Activated CD4-positive, alpha-beta memory T cell treated with anti-CD3 and anti-CD28 coated beads for 36 hours (primary cell): ENCODE measurements at regions of chr12 and their contacts with region 1.

Region 1: DNA sequence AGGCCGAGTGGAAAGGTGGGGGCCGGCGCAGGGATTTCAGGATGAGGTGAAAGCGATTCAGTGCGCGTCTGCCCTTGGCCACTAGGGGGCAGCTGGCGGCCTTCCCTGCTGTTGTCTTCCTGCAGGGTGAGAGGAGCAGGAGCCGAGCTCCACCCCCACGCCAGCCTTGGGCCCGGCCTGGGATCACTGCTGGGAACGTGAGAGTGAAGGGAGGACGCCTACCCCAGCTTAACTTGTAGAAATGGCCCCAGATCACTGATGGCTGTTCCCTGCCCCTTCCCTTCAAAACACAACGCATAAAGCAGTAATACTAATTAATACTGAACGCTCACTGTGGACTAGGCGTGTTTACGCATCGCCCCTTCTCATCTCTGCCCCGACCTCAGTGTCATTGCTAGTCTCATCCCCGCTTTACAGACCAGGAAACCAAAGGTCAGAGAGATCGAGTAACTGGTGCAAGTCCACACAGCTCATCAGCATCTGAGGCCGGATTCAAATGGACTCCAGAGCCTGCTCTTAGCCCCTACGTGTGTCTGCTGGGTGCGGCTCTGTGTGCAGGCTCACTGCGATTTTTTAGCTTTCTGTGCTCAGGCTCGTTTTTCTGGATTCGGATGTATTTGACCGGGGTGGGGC is 24.3 kb downstream of the MVK start:
- DNase-seq: peak; percentile 75
- H3K4me3 Mint-ChIP-seq: no peak overlapping the region
- H3K27ac Mint-ChIP-seq: no peak overlapping the region
- H3K4me1 Mint-ChIP-seq: peaks cover 33% of the 10 kb centered on the region
- H3K27me3 Mint-ChIP-seq: no peaks in the 10 kb centered on the region

Region 2: GRCh38 chr12:109239179-109239578 is 358.7 kb before region 1 on chr12:
- CTCF ChIA-PET with region 1: no interaction called
- POLR2A ChIA-PET with region 1: no interaction called
- intact Hi-C with region 1: no loop called
- DNase-seq: peak; percentile 11
- H3K4me3 Mint-ChIP-seq: no peak overlapping the region
- H3K27ac Mint-ChIP-seq: no peak overlapping the region
- H3K4me1 Mint-ChIP-seq: peaks cover 4% of the 10 kb centered on the region
- H3K27me3 Mint-ChIP-seq: no peaks in the 10 kb centered on the region

Region 3: DNA sequence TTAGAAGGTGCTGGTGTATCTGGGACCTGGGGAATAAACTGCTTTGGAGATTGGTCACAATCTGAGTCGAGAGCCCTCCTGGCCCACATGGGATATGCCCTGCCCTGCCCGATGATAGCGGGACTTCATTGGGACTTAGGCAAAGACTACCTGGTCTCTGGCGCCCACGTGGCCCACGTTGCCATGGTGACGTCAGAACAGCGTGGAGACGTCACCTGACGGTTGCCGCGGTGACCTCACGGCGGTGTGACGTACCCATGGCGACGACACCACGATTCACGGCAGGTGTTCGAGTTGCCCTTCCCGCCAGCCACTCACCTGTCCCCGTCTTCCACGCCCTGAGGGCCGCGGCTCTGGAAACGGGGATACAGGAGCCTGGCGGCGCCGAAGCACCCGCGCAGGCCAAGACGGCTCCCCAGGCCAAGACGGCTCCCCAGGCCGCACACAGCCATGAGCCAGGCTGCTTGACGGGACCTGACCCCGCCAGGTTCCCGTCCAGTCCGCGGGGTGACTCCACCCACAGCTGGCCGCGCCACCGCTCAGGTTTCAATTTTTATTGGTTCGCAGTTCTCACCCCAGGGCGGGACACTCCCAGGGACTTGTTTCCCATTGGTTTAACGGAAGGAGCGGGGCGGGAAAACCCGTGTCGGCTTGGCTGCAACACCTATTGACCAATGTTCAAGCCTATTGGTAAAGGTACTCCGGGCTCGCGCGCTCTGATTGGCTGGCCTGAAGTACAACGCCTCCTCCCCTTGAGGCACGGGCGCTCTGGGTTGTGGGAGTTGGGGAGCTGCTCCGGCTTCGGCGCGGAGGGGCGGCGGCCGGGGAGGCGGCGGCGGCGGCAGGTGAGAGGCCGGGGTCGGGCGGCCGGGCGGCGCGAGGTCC is 24.6 kb before region 1 on chr12 and contains the starts of genes MMAB and MVK:
- CTCF ChIA-PET with region 1: interaction called, 26 read pairs
- POLR2A ChIA-PET with region 1: interaction called, 3 read pairs
- intact Hi-C with region 1: no loop called
- DNase-seq: peak; percentile 100
- H3K4me3 Mint-ChIP-seq: peak within 1 kb of the TSS; percentile 86
- H3K27ac Mint-ChIP-seq: peak within 1 kb of the TSS; percentile 85
- H3K4me1 Mint-ChIP-seq: peaks cover 27% of the 10 kb centered on the region
- H3K27me3 Mint-ChIP-seq: no peaks in the 10 kb centered on the region
- total RNA-seq, gene MMAB: 42.4 to 48.3 TPM
- total RNA-seq, gene MVK: 21.2 TPM

Region 4: GRCh38 chr12:109586385-109587296 is 11.3 kb before region 1 on chr12:
- CTCF ChIA-PET with region 1: interaction called, 19 read pairs
- POLR2A ChIA-PET with region 1: no interaction called
- intact Hi-C with region 1: no loop called
- DNase-seq: no peak
- H3K4me3 Mint-ChIP-seq: no peak overlapping the region
- H3K27ac Mint-ChIP-seq: no peak overlapping the region
- H3K4me1 Mint-ChIP-seq: no peaks in the 10 kb centered on the region
- H3K27me3 Mint-ChIP-seq: no peaks in the 10 kb centered on the region

Region 5: GRCh38 chr12:109612975-109613502 is 15.1 kb after region 1 on chr12:
- CTCF ChIA-PET with region 1: interaction called, 11 read pairs
- POLR2A ChIA-PET with region 1: no interaction called
- intact Hi-C with region 1: no loop called
- DNase-seq: no peak
- H3K4me3 Mint-ChIP-seq: no peak overlapping the region
- H3K27ac Mint-ChIP-seq: no peak overlapping the region
- H3K4me1 Mint-ChIP-seq: no peaks in the 10 kb centered on the region
- H3K27me3 Mint-ChIP-seq: peaks cover 22% of the 10 kb centered on the region

Region 6: GRCh38 chr12:109621211-109621694 is 23.3 kb after region 1 on chr12:
- CTCF ChIA-PET with region 1: interaction called, 15 read pairs
- POLR2A ChIA-PET with region 1: no interaction called
- intact Hi-C with region 1: no loop called
- DNase-seq: no peak
- H3K4me3 Mint-ChIP-seq: no peak overlapping the region
- H3K27ac Mint-ChIP-seq: no peak overlapping the region
- H3K4me1 Mint-ChIP-seq: peaks cover 4% of the 10 kb centered on the region
- H3K27me3 Mint-ChIP-seq: peaks cover 22% of the 10 kb centered on the region

Region 7: GRCh38 chr12:109775172-109775881 is 177.4 kb after region 1 on chr12:
- CTCF ChIA-PET with region 1: interaction called, 100 read pairs
- POLR2A ChIA-PET with region 1: no interaction called
- intact Hi-C with region 1: loop called (anchors 1 kb)
- DNase-seq: peak; percentile 80
- H3K4me3 Mint-ChIP-seq: no peak overlapping the region
- H3K27ac Mint-ChIP-seq: no peak overlapping the region
- H3K4me1 Mint-ChIP-seq: peaks cover 6% of the 10 kb centered on the region
- H3K27me3 Mint-ChIP-seq: peaks cover 2% of the 10 kb centered on the region